Gastrocnemius medialis (tissue), 4 donors: ENCODE measurements at regions of chr16 and their contacts with region 1.

Region 1: GRCh38 chr16:11851294-11852091 is at the start of gene RSL1D1:
- DNase-seq: peak; percentile 85 to 91
- ATAC-seq: peak; percentile 96
- H3K4me3 ChIP-seq: peak within 1 kb of the TSS; percentile 87 to 98 (median 92)
- H3K27ac ChIP-seq: peak within 1 kb of the TSS; percentile 95 to 98 (median 96)
- H3K4me1 ChIP-seq: peaks cover 35 to 39% of the 10 kb centered on the region in 2 donors
- H3K27me3 ChIP-seq: no peaks in the 10 kb centered on the region
- CTCF ChIP-seq: peak in 2 of 5 experiments; percentile 7 to 30
- POLR2A ChIP-seq: peak; percentile 98 to 99
- total RNA-seq, gene RSL1D1: 215 to 302 (median 259) TPM

Region 2: GRCh38 chr16:11481987-11482386 is 369.5 kb before region 1 on chr16:
- in situ Hi-C with region 1: no loop called
- intact Hi-C with region 1: no loop called
- DNase-seq: no peak
- ATAC-seq: no peak
- H3K4me3 ChIP-seq: no peak overlapping the region
- H3K27ac ChIP-seq: no peak overlapping the region
- H3K4me1 ChIP-seq: no peaks in the 10 kb centered on the region
- H3K27me3 ChIP-seq: no peaks in the 10 kb centered on the region
- CTCF ChIP-seq: no peak
- POLR2A ChIP-seq: no peak

Region 3: DNA sequence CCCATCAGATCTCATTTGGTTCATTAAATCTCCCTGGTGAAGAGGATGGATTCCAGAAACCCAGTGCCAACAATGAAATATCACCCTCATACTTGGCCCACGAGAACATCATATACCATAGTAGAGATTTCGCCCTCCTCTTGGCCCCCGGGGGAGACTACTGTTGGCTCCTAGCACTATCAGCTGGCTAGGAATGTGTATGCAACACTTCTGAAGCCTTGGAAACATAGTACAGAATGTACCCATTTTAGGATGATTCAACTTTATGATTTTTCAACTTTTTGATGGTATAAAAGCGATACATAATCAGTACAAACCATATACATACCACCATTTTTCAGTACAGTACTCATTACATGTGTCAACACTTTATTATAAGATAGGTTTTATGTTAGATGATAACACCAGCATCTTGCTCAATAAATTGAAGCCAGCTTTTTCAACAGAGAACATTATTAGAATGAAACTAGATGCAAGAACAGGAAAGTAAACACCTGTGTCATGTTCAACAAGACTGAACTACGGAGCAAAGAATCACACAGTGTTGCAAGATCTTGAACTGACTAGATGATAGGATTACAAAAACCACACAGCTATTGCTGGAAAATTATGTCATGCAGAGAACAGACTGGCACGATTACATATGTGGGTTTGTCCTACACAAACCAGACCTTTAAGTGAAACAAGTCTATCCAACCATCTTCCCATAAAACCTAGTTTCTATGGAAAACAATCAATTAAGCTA is 17.4 kb before region 1 on chr16:
- in situ Hi-C with region 1: no loop called
- intact Hi-C with region 1: loop called (anchors 2 kb)
- DNase-seq: peak; percentile 50 to 69
- ATAC-seq: peak; percentile 97
- H3K4me3 ChIP-seq: no peak overlapping the region
- H3K27ac ChIP-seq: peak overlapping the region; percentile 84 to 89 (median 88)
- H3K4me1 ChIP-seq: peaks cover 11 to 24% of the 10 kb centered on the region in 2 donors
- H3K27me3 ChIP-seq: no peaks in the 10 kb centered on the region
- CTCF ChIP-seq: no peak
- POLR2A ChIP-seq: peak in 1 of 2 donors; percentile 15

Region 4: DNA sequence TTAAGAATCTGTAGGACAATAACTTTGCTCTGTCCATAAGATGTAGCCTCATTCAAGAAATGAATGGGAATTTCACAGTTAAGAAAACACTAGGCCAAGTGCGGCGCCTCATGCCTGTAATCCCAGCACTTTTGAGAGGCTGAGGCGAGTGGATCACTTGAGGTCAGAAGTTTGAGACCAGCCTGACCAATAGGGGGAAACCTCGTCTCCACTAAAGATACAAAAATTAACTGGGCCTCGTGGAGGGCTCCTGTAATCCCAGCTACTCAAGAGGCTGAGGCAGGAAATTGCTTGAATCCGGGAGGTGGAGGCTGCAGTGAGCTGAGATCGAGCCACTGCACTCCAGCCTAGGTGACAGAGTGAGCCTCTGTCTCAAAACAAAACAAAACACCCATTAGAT is 19.7 kb after region 1 on chr16:
- in situ Hi-C with region 1: no loop called
- intact Hi-C with region 1: no loop called
- DNase-seq: no peak
- ATAC-seq: no peak
- H3K4me3 ChIP-seq: no peak overlapping the region
- H3K27ac ChIP-seq: peak overlapping the region in 2 of 4 donors; percentile 30 to 41
- H3K4me1 ChIP-seq: peaks cover 22 to 27% of the 10 kb centered on the region in 2 donors
- H3K27me3 ChIP-seq: no peaks in the 10 kb centered on the region
- CTCF ChIP-seq: peak in 1 of 5 experiments; percentile 18
- POLR2A ChIP-seq: no peak